ENCODE measurements at regions of chr12 and their contacts with region 1.

Region 1: GRCh38 chr12:48865434-48866290 is at the start of gene RND1:
- DNase-seq: peak; percentile 89
- ATAC-seq: peak; percentile 99
- H3K4me3 ChIP-seq: peak within 1 kb of the TSS; percentile 52 to 60
- H3K27ac ChIP-seq: no peak within 1 kb of the TSS
- H3K4me1 ChIP-seq: peaks cover 3 to 18% of the 10 kb centered on the region in 2 experiments; a peak in 2 of 4 replicates
- H3K27me3 ChIP-seq: peaks cover 10% of the 10 kb centered on the region; the same call in 1 of the 2 replicates
- CTCF ChIP-seq: 0 out of 6 replicates have a peak, but pooled peaks of 1 of the 3 experiments have one; percentile 1
- POLR2A ChIP-seq: peak; percentile 98
- RAD21 ChIP-seq: no peak
- total RNA-seq, gene RND1: 2.0 TPM

Region 2: DNA sequence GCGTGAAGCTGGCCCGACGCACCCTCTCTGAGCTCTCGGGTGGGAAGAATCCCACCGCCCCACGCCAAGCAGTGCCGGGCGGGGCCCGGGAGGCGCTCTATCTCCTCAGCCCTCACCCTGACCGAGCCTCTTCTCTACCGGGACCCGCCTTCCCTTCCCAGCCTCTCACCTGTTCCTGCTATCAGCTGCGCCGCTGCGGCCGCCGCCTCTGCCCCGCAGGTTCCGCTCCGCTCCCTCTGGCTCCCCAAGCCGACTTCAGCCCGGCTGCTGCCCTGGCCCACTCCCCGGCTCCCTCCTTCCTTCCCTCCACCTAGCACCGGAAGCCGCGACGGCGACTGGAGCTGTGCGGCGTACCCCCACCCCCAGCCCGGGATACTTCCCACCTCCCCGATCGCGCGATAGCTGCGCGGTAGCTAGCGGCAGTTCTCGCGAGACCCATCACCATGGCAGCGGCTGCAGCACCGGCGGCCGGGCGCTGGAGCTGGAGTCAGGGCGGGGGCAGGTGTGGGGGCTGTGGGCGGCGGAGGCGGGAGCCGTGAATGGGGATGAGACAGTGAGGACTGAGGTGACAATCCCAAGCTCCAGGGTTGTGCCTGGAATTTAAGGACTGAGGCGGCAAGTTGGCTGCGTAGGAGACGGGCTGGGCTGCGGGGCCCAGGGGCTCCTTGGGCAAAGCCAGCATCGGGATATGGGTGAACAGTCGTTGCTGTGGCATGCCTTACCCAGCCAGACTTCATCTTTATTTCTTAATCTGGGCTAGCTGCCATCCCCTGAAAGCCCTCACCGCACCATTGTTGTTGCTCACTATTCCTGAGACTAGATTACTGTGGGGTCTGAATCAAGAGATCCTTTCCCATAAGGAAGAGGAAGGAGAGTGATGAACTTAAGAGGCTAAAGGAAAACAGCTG is 91.7 kb after region 1 on chr12 and contains the start of gene ARF3:
- CTCF ChIA-PET with region 1: no interaction called
- POLR2A ChIA-PET with region 1: interaction called, 11 read pairs
- RAD21 ChIA-PET with region 1: no interaction called
- intact Hi-C with region 1: no loop called
- DNase-seq: peak; percentile 73
- ATAC-seq: peak; percentile 88
- H3K4me3 ChIP-seq: peak within 1 kb of the TSS; percentile 94 to 95
- H3K27ac ChIP-seq: peak within 1 kb of the TSS; percentile 94
- H3K4me1 ChIP-seq: peaks cover 3 to 18% of the 10 kb centered on the region in 2 experiments
- H3K27me3 ChIP-seq: no peaks in the 10 kb centered on the region
- CTCF ChIP-seq: no peak
- POLR2A ChIP-seq: peak; percentile 67
- RAD21 ChIP-seq: no peak
- total RNA-seq, gene ARF3: 166 TPM

Region 3: GRCh38 chr12:48969160-48969771 is 103.6 kb after region 1 on chr12:
- CTCF ChIA-PET with region 1: no interaction called
- POLR2A ChIA-PET with region 1: no interaction called
- RAD21 ChIA-PET with region 1: no interaction called
- intact Hi-C with region 1: no loop called
- DNase-seq: no peak
- ATAC-seq: no peak
- H3K4me3 ChIP-seq: no peak overlapping the region
- H3K27ac ChIP-seq: no peak overlapping the region
- H3K4me1 ChIP-seq: peaks cover 6 to 20% of the 10 kb centered on the region in 2 experiments; a peak in 3 of 4 replicates
- H3K27me3 ChIP-seq: no peaks in the 10 kb centered on the region
- CTCF ChIP-seq: no peak
- POLR2A ChIP-seq: no peak
- RAD21 ChIP-seq: no peak

Measured in HCT116 (cell line).